ENCODE measurements at regions of chr20 and their contacts with region 1.

Region 1: GRCh38 chr20:62065669-62066338 is at the start of gene TAF4:
- DNase-seq: peak; percentile 58 to 95 (median 80)
- ATAC-seq: peak; percentile 74
- H3K4me3 ChIP-seq: peak within 1 kb of the TSS; percentile 77
- H3K4me3 Mint-ChIP-seq: peak within 1 kb of the TSS; percentile 96
- H3K27ac ChIP-seq: peak within 1 kb of the TSS; percentile 15 to 70
- H3K27ac Mint-ChIP-seq: peak within 1 kb of the TSS; percentile 98
- H3K4me1 ChIP-seq: peaks cover 46% of the 10 kb centered on the region
- H3K4me1 Mint-ChIP-seq: peaks cover 51% of the 10 kb centered on the region
- H3K27me3 ChIP-seq: no peaks in the 10 kb centered on the region
- H3K27me3 Mint-ChIP-seq: no peaks in the 10 kb centered on the region
- CTCF ChIP-seq: no peak
- total RNA-seq, gene TAF4: 11.1 to 12.5 TPM

Region 2: DNA sequence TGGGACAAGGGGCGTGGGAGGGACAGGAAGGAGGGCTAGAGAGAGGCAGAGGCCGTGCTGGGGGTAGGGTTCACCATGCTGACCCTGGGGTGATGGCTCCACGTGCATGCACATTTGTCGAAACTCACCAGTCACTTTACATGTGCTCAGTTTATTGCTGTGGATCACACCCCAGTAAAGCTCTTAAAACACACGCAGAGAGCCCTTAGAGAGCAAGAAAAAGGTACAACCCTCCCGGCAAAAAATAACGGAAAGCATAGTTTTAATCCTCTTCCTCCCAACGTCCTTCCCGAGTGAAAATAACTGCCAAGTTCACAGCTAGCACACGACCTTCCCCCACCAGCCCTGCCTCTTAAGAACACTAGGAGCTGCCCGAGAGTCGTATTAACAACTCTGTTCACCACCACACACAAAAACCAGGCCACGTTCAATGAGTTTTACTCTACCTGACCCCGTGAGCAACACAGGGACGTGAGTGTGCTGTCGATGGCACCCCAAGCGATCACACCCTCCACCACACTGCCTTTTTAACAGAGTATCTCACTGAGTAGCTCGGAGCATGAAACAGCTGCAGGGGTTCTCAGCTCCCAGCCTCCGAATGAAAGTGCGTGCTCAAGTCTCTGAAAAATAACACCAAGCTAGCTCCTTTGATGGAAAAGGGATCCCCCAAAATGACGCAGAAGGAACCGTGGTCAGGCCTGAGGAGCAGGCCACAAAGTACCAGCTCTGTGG is 39.8 kb before region 1 on chr20:
- CTCF ChIA-PET with region 1: interaction called, 3 read pairs
- POLR2A ChIA-PET with region 1: interaction called, 16 read pairs
- intact Hi-C with region 1: loop called (anchors 2 to 5 kb)
- DNase-seq: peak in 8 of 14 experiments; percentile 7 to 66 (median 30)
- ATAC-seq: peak; percentile 79
- H3K4me3 ChIP-seq: no peak overlapping the region
- H3K4me3 Mint-ChIP-seq: peak overlapping the region; percentile 16
- H3K27ac ChIP-seq: no peak overlapping the region
- H3K27ac Mint-ChIP-seq: peak overlapping the region; percentile 70
- H3K4me1 ChIP-seq: peaks cover 35% of the 10 kb centered on the region
- H3K4me1 Mint-ChIP-seq: peaks cover 43% of the 10 kb centered on the region
- H3K27me3 ChIP-seq: no peaks in the 10 kb centered on the region
- H3K27me3 Mint-ChIP-seq: no peaks in the 10 kb centered on the region
- CTCF ChIP-seq: peak; percentile 57

Region 3: DNA sequence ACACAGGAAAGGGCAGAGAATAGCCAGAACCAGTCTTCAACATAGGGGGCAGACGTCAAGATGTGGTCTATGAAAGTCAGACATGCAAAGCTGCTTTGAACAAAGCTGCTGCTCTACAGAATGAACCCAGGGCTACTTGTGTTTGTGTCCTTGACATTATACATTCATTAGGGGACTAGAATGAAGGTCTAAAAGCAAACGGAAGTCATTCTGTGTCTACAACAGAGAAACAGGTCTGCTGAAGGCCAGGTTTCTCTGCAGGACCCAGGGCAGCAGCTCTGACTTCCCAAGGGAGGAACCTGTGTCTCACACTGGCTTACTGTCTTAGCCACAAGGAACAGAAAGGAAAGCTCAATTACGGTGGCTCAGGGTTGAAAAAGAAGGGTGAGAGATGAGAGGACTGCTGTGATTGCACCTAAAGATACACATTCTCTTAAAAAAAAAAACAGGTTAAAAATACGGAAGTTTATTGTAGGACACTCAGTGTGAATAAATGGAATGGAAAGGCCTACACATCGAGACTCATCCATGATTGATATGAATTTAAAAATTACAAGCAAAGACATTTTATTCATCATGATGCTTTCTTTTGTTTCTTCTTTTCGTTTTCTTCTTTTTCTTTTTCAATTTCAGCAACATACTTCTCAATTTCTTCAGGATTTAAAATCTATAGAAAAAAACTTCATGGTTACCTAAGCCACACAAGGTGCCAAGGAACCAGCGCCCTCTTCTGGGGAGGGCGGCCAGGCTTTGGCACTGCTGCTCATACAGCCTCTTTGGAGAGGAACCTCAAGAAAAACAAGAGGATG is 70.7 kb after region 1 on chr20:
- CTCF ChIA-PET with region 1: no interaction called
- POLR2A ChIA-PET with region 1: interaction called, 51 read pairs
- intact Hi-C with region 1: loop called in 1 of 2 experiments (anchors 5 kb)
- DNase-seq: peak; percentile 63 to 89 (median 75)
- ATAC-seq: peak; percentile 70
- H3K4me3 ChIP-seq: no peak overlapping the region
- H3K4me3 Mint-ChIP-seq: peak overlapping the region; percentile 66
- H3K27ac ChIP-seq: no peak overlapping the region
- H3K27ac Mint-ChIP-seq: peak overlapping the region; percentile 77
- H3K4me1 ChIP-seq: peaks cover 48% of the 10 kb centered on the region
- H3K4me1 Mint-ChIP-seq: peaks cover 56% of the 10 kb centered on the region
- H3K27me3 ChIP-seq: no peaks in the 10 kb centered on the region
- H3K27me3 Mint-ChIP-seq: no peaks in the 10 kb centered on the region
- CTCF ChIP-seq: peak; percentile 76

Region 4: DNA sequence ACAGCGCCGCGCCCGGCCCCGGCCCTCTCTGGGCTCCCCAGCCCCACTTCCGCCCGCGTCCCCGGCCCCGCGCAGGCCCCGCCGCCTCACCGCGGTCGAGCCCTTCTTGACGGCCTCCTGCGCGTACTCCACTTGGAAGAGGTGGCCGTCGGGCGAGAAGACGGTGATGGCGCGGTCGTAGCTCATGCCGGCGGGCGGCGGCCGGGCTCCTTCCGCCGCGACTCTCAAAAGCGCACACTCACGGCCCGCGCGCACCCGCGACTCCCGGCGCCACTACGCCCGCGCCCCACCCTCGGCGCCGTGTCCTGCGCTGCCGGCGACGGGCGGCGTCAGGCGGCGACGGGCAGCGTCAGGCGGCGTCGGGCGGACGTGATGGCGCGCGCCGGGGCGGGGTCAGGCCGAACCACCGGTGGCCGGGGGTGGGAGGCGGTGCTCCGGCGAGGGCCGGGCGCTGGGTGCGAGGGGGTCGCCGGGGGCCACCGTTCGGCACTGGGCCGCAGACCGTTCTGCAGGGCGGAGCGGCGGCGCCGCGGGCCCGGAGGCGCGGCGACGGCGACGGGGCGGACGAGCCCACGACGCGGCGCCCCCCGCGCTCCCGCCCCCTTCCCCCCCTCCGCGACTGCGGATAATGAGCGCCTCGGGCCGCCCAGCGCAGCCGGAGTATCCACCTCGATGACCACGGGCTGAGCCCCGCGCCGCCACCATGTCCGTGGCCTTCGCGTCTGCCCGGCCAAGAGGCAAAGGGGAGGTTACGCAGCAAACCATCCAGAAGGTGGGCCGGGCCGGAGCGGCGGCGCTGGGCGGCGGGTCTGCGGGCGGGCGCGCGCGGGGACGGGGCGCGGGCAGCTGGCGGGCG is 77.5 kb after region 1 on chr20 and contains the starts of genes PSMA7 and SS18L1:
- CTCF ChIA-PET with region 1: no interaction called
- POLR2A ChIA-PET with region 1: interaction called, 51 read pairs
- intact Hi-C with region 1: loop called (anchors 1 to 5 kb)
- DNase-seq: peak; percentile 71 to 98 (median 83)
- ATAC-seq: peak; percentile 83
- H3K4me3 ChIP-seq: peak within 1 kb of the TSS; percentile 65
- H3K4me3 Mint-ChIP-seq: peak within 1 kb of the TSS; percentile 95
- H3K27ac ChIP-seq: peak within 1 kb of the TSS; percentile 53 to 75
- H3K27ac Mint-ChIP-seq: peak within 1 kb of the TSS; percentile 96
- H3K4me1 ChIP-seq: peaks cover 49% of the 10 kb centered on the region
- H3K4me1 Mint-ChIP-seq: peaks cover 51% of the 10 kb centered on the region
- H3K27me3 ChIP-seq: no peaks in the 10 kb centered on the region
- H3K27me3 Mint-ChIP-seq: no peaks in the 10 kb centered on the region
- CTCF ChIP-seq: no peak
- total RNA-seq, gene PSMA7: 150 to 158 TPM
- total RNA-seq, gene SS18L1: 12.8 to 13.4 TPM